Activated T-helper 2 cell treated with anti-CD3 and anti-CD28 coated beads, Interferon-gamma antibody, Interleukin-2, Interleukin-4, amounts not matched to agents 10 μg/mL and 5 μg/mL and 100 μg/mL, durations not matched to agents 14 hours and 24 hours and 36 hours (primary cell): ENCODE measurements at regions of chr4 and their contacts with region 1.

Region 1: DNA sequence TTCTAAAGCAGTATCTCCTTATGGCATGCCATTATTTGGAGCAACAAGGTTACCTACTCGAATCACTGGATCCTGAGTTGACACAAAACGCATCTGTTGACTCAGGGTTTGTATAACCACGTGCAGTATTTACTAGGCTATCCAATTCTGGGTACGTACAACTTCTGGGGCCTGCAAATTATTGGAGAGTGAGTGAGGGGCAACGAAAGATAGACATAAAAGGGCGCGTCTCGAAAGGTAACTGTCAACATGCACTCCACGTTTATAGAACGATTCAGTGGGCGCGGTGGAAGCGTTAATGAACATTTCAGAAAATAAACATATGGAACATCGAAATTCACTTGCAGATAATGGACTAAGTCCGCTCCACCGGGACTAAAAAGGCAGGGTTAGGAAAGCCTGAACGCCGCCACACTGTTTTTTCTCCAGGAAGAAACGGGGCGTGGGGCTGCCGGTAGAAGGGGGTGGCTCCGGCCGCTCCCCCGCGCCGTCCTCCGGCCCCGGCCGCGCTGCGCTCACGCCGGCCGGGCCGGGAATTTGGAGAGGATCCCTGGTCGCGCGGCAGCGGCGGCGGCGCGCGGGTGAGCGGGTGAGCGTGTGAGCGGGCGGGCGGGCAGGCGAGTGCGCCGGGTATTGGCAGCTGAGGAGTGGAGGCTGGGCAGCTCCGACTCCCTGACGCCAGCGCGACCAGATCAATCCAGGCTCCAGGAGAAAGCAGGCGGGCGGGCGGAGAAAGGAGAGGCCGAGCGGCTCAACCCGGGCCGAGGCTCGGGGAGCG is at the start of gene SMAD1:
- DNase-seq: peak; percentile 28
- H3K4me3 Mint-ChIP-seq: peak within 1 kb of the TSS; percentile 83
- H3K27ac Mint-ChIP-seq: peak within 1 kb of the TSS; percentile 81
- H3K4me1 Mint-ChIP-seq: peaks cover 13% of the 10 kb centered on the region
- H3K27me3 Mint-ChIP-seq: peaks cover 30% of the 10 kb centered on the region
- total RNA-seq, gene SMAD1: 5.8 and 7.5 TPM in 2 replicates

Region 2: DNA sequence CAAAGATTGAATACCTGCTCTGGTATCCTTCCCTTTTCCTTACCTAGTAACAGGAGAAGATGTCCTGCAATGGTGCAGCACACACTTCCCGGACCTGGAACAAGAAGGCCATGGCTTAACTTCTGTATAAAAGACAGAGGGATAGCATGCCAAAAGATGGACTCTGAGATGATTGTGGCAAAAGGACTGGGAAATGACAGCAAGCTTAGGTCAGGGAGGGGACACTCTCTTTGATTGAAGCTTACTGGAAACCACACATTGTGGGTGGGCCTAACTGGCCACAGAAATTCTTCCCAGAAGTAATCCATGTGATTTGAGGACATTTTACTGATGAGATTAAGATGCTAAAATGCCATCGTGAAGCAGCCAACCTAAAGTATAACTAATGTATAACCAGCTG is 230.0 kb before region 1 on chr4:
- intact Hi-C with region 1: no loop called
- DNase-seq: no peak
- H3K4me3 Mint-ChIP-seq: no peak overlapping the region
- H3K27ac Mint-ChIP-seq: no peak overlapping the region
- H3K4me1 Mint-ChIP-seq: no peaks in the 10 kb centered on the region
- H3K27me3 Mint-ChIP-seq: peaks cover 11% of the 10 kb centered on the region

Region 3: GRCh38 chr4:145299380-145300076 is 181.8 kb before region 1 on chr4:
- intact Hi-C with region 1: loop called (anchors 2 kb)
- DNase-seq: peak; percentile 21
- H3K4me3 Mint-ChIP-seq: no peak overlapping the region
- H3K27ac Mint-ChIP-seq: peak overlapping the region; percentile 53
- H3K4me1 Mint-ChIP-seq: peaks cover 14% of the 10 kb centered on the region
- H3K27me3 Mint-ChIP-seq: peaks cover 21% of the 10 kb centered on the region

Region 4: DNA sequence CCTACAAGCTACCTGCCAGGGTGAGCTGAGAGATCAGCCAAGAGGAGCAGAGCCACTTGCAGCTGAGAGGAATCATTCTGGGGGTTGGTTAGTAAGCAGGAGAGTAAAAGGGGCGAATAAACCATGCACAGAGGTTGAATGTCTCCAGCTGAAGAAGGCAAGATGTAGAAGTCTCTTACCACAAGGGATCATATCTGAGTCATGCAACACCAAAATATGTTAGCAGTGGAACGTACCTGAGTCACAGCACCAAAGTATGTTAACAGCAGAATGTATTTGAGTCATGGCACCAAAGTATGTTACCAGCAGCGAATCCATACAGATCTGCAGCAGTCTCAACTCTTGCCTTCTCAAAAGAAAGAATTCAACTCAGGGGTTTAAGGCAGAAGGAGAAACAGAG is 228.5 kb after region 1 on chr4:
- intact Hi-C with region 1: loop called (anchors 10 kb)
- DNase-seq: no peak
- H3K4me3 Mint-ChIP-seq: no peak overlapping the region
- H3K27ac Mint-ChIP-seq: peak overlapping the region; percentile 34
- H3K4me1 Mint-ChIP-seq: peaks cover 17% of the 10 kb centered on the region
- H3K27me3 Mint-ChIP-seq: no peaks in the 10 kb centered on the region

Region 5: GRCh38 chr4:145851511-145852201 is 370.3 kb after region 1 on chr4:
- intact Hi-C with region 1: no loop called
- DNase-seq: no peak
- H3K4me3 Mint-ChIP-seq: no peak overlapping the region
- H3K27ac Mint-ChIP-seq: no peak overlapping the region
- H3K4me1 Mint-ChIP-seq: peaks cover 8% of the 10 kb centered on the region
- H3K27me3 Mint-ChIP-seq: no peaks in the 10 kb centered on the region

Region 6: DNA sequence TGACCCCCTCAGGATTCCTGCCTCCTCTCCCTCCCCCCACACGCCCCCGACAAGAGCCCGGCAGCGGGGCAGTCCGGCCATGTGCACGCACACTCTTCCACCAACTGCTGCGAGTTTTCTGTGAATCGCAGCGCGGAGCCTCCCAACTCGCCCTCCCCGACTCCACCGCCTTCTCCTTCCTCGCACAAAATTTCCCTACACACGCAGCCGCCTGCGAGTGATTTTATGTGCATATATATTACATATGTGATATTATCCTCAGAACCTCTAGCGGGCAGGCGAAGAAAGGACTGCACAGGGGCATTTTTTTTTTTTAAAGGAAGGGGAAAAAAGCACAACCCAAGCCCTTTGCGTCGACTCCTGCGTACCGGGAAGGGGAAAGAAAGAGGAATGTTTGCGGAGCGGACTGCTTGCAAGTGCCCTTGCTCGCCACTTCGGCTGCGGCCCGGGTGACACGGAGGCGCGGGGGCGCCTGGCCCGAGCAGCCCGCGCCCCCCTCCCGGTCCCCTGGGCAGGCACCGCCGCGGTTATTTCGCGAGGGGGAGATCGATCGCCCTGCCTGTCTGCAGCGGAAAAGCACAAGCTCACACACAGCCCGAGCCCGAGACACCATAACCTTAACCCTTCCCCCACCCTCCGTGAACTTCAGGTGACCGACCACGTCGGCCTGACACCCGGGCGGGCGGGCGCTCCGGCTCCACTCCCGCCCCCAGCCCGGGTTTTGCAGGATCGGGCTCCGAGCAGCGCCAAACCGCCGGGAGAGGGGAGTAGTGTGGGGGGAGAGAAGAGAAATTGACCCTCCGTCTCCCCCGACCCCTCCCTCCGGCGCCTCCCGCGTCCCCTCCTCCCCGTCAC is 455.0 kb after region 1 on chr4:
- intact Hi-C with region 1: loop called (anchors 5 kb)
- DNase-seq: peak; percentile 58
- H3K4me3 Mint-ChIP-seq: peak overlapping the region; percentile 94
- H3K27ac Mint-ChIP-seq: peak overlapping the region; percentile 96
- H3K4me1 Mint-ChIP-seq: peaks cover 44% of the 10 kb centered on the region
- H3K27me3 Mint-ChIP-seq: no peaks in the 10 kb centered on the region

Region 7: GRCh38 chr4:146458594-146458993 is 977.2 kb after region 1 on chr4:
- intact Hi-C with region 1: loop called (anchors 10 kb)
- DNase-seq: no peak
- H3K4me3 Mint-ChIP-seq: peak overlapping the region; percentile 65
- H3K27ac Mint-ChIP-seq: peak overlapping the region; percentile 86
- H3K4me1 Mint-ChIP-seq: peaks cover 29% of the 10 kb centered on the region
- H3K27me3 Mint-ChIP-seq: no peaks in the 10 kb centered on the region